PC-9 (cell line): ENCODE measurements at regions of chr12 and their contacts with region 1.

Region 1: DNA sequence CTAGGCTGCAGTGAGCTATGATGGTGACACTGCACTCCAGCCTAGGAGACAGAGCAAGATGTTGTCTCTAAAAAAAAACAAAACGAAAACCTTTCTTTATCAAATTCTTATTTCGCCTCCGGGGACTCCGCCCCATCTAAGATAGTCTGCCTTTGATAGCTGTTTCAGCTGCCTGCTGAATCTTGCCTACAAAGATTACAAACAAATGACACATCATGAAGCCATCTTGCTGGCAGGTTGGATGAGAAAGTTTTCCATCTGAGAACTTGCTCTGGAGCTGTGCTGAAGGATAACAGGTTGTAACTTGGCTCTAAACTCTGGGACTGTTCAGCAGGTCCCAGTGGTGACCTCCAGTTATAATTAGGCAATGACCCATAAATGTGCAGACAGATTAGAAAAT is 41.8 kb upstream of the AEBP2 start:
- DNase-seq: peak; percentile 85 to 86
- H3K4me3 ChIP-seq: no peak overlapping the region
- H3K27ac ChIP-seq: no peak overlapping the region
- H3K4me1 ChIP-seq: peaks cover 15% of the 10 kb centered on the region
- H3K27me3 ChIP-seq: no peaks in the 10 kb centered on the region
- CTCF ChIP-seq: no peak

Region 2: GRCh38 chr12:19332196-19332595 is 65.3 kb before region 1 on chr12:
- CTCF ChIA-PET with region 1: no interaction called
- POLR2A ChIA-PET with region 1: no interaction called
- intact Hi-C with region 1: no loop called
- DNase-seq: no peak
- H3K4me3 ChIP-seq: no peak overlapping the region
- H3K27ac ChIP-seq: no peak overlapping the region
- H3K4me1 ChIP-seq: no peaks in the 10 kb centered on the region
- H3K27me3 ChIP-seq: no peaks in the 10 kb centered on the region
- CTCF ChIP-seq: no peak

Region 3: DNA sequence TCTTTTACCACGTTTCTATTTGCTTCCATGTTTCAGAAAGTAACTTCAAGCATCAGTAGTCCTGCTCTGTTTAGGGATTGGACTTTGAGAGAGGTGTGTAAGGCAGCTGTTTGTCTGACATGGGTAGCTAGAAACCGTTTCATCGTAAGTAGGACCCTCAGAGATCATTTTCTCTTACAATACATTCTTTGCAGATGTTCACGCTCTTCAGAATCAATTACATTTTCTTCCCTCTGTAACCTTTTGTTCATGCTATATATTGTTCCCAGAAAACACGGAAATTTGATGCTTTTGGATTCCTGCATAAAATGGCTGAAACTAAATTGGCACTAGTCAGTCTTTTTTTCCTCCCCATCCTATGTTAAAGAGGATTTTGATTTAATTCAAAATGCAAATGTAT is 20.8 kb before region 1 on chr12:
- CTCF ChIA-PET with region 1: no interaction called
- POLR2A ChIA-PET with region 1: no interaction called
- intact Hi-C with region 1: no loop called
- DNase-seq: no peak
- H3K4me3 ChIP-seq: no peak overlapping the region
- H3K27ac ChIP-seq: no peak overlapping the region
- H3K4me1 ChIP-seq: peaks cover 5% of the 10 kb centered on the region
- H3K27me3 ChIP-seq: no peaks in the 10 kb centered on the region
- CTCF ChIP-seq: no peak

Region 4: GRCh38 chr12:19431407-19432308 is 34.1 kb after region 1 on chr12:
- CTCF ChIA-PET with region 1: no interaction called
- POLR2A ChIA-PET with region 1: no interaction called
- intact Hi-C with region 1: loop called (anchors 5 kb)
- DNase-seq: peak; percentile 68 to 75
- H3K4me3 ChIP-seq: no peak overlapping the region
- H3K27ac ChIP-seq: no peak overlapping the region
- H3K4me1 ChIP-seq: peaks cover 11% of the 10 kb centered on the region
- H3K27me3 ChIP-seq: no peaks in the 10 kb centered on the region
- CTCF ChIP-seq: no peak

Region 5: DNA sequence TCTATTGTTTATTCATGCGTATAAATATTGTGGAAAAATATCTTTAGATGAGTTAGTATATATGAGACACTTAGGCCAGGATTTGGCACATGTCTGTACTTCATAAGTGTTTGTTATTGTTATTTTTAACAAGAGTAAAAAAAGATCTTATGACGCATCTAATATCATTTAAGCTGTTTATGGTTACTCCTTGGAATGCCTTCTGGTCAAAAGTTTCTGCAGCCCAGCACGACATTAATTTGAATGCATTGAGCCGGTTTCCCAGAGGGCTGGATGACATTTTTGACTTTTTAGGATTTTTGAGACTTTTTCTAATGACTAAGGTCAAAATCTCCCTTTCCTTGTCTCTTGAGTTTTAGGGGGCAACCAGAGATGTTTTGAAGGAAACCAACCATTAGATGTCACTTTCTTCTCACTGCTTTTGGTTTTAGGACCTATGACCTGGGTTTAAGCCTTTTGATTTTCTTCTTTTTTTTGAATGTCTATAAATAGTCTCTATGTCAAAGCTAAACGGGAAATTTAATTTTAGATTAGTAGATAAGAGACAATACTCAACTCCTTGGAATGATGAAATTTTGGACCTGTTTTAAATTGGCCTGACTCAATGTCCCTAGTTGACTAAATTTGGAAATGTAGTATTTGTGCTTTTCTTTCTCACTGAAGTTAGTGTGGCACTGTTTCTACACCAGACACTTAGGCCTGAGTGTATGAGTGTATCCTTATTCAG is 257.3 kb after region 1 on chr12:
- CTCF ChIA-PET with region 1: no interaction called
- POLR2A ChIA-PET with region 1: interaction called, 11 read pairs
- intact Hi-C with region 1: no loop called
- DNase-seq: no peak
- H3K4me3 ChIP-seq: no peak overlapping the region
- H3K27ac ChIP-seq: no peak overlapping the region
- H3K4me1 ChIP-seq: no peaks in the 10 kb centered on the region
- H3K27me3 ChIP-seq: no peaks in the 10 kb centered on the region
- CTCF ChIP-seq: no peak

Region 6: GRCh38 chr12:19833775-19834501 is 436.4 kb after region 1 on chr12:
- CTCF ChIA-PET with region 1: no interaction called
- POLR2A ChIA-PET with region 1: no interaction called
- intact Hi-C with region 1: no loop called
- DNase-seq: no peak
- H3K4me3 ChIP-seq: no peak overlapping the region
- H3K27ac ChIP-seq: no peak overlapping the region
- H3K4me1 ChIP-seq: no peaks in the 10 kb centered on the region
- H3K27me3 ChIP-seq: no peaks in the 10 kb centered on the region
- CTCF ChIP-seq: no peak